MCF 10A (cell line): ENCODE measurements at regions of chr4 and their contacts with region 1.

Region 1: DNA sequence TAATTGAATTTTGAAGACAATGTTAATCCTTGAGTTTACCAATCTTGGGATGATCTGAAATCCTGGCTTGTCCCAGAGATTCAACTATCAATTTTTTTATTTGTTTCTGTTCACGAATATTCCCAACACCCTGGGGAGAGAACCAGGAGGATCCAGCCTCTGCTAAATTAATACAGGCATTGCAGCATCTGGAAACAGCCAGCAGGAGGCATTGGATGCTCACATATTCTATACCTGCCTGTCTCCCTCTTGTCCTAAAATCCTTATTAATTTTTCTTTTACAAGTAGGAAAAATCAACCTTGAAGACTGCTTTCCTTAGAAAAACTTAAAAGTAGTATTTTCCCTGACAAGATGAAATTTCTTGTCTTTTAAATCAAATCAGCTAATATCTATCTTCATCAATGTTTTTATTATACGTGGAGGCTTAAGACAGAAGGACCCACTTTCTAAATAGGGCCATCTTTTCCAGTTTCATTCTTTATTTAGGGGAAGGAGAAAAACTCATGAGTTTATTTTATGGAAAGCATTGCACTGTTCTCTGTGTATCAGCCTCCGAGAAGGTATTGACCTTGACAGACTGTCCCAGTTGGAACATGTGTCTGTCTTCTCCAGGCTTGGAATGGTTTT is 102.4 kb downstream of the CLNK start:
- DNase-seq: peak; percentile 69
- H3K4me3 Mint-ChIP-seq: no peak overlapping the region
- H3K27ac Mint-ChIP-seq: no peak overlapping the region
- H3K4me1 Mint-ChIP-seq: no peaks in the 10 kb centered on the region
- H3K27me3 Mint-ChIP-seq: no peaks in the 10 kb centered on the region
- CTCF ChIP-seq: peak; percentile 71

Region 2: DNA sequence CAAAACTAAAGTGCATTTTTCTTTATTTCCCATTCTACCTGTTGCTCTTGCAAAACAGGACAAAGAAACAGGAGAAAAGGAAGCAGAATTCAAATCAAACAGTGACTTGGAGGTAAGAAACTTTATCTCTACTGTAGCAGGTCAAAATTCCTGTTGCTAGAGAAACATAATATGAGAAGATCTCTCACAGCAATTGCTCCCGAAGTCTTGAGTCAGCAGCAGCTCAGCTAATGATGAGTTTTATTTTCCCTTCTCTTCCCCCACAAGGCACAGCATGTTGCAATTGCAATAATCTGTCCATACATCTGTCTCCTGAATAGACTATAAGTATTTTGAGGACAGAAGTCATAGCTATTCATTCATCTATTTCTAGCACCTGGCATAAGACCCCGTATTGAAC is 10.3 kb before region 1 on chr4:
- CTCF ChIA-PET with region 1: interaction called, 13 read pairs
- POLR2A ChIA-PET with region 1: no interaction called
- intact Hi-C with region 1: no loop called
- DNase-seq: no peak
- H3K4me3 Mint-ChIP-seq: no peak overlapping the region
- H3K27ac Mint-ChIP-seq: no peak overlapping the region
- H3K4me1 Mint-ChIP-seq: no peaks in the 10 kb centered on the region
- H3K27me3 Mint-ChIP-seq: peaks cover 12% of the 10 kb centered on the region
- CTCF ChIP-seq: no peak

Region 3: GRCh38 chr4:11424000-11424399 is 841.8 kb after region 1 on chr4:
- CTCF ChIA-PET with region 1: interaction called, 11 read pairs
- POLR2A ChIA-PET with region 1: interaction called, 3 read pairs
- intact Hi-C with region 1: loop called (anchors 1 kb)
- DNase-seq: peak; percentile 70
- H3K4me3 Mint-ChIP-seq: no peak overlapping the region
- H3K27ac Mint-ChIP-seq: no peak overlapping the region
- H3K4me1 Mint-ChIP-seq: peaks cover 6% of the 10 kb centered on the region
- H3K27me3 Mint-ChIP-seq: peaks cover 11% of the 10 kb centered on the region
- CTCF ChIP-seq: peak; percentile 15

Region 4: GRCh38 chr4:11428899-11429698 is 846.9 kb after region 1 on chr4:
- CTCF ChIA-PET with region 1: interaction called, 11 read pairs
- POLR2A ChIA-PET with region 1: interaction called, 3 read pairs
- intact Hi-C with region 1: loop called (anchors 1 kb)
- DNase-seq: peak; percentile 88
- H3K4me3 Mint-ChIP-seq: peak overlapping the region; percentile 83
- H3K27ac Mint-ChIP-seq: no peak overlapping the region
- H3K4me1 Mint-ChIP-seq: peaks cover 10% of the 10 kb centered on the region
- H3K27me3 Mint-ChIP-seq: peaks cover 11% of the 10 kb centered on the region
- CTCF ChIP-seq: peak; percentile 81

Region 5: DNA sequence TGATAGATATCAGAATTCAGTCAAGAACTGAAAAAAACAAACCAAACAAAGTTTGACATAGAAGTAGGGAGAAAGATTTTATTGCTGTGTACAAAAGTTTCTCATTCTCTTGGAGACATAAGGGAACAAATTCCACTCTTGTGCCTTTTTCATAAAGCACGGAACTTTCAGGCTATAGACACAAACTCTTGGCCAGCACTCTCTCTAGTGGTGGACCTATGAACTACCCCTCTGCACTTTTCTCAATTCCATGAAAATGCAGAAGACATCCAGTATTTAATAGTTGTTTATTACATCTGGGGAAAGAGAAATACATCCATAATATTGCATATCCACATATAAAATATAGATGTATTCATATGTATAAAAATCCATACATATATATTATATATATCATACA is 1138.1 kb after region 1 on chr4:
- CTCF ChIA-PET with region 1: interaction called, 15 read pairs
- POLR2A ChIA-PET with region 1: no interaction called
- intact Hi-C with region 1: loop called (anchors 1 kb)
- DNase-seq: peak; percentile 63
- H3K4me3 Mint-ChIP-seq: no peak overlapping the region
- H3K27ac Mint-ChIP-seq: no peak overlapping the region
- H3K4me1 Mint-ChIP-seq: no peaks in the 10 kb centered on the region
- H3K27me3 Mint-ChIP-seq: no peaks in the 10 kb centered on the region
- CTCF ChIP-seq: peak; percentile 82